IMR-90 (cell line): ENCODE measurements at regions of chr2 and their contacts with region 1.

Region 1: DNA sequence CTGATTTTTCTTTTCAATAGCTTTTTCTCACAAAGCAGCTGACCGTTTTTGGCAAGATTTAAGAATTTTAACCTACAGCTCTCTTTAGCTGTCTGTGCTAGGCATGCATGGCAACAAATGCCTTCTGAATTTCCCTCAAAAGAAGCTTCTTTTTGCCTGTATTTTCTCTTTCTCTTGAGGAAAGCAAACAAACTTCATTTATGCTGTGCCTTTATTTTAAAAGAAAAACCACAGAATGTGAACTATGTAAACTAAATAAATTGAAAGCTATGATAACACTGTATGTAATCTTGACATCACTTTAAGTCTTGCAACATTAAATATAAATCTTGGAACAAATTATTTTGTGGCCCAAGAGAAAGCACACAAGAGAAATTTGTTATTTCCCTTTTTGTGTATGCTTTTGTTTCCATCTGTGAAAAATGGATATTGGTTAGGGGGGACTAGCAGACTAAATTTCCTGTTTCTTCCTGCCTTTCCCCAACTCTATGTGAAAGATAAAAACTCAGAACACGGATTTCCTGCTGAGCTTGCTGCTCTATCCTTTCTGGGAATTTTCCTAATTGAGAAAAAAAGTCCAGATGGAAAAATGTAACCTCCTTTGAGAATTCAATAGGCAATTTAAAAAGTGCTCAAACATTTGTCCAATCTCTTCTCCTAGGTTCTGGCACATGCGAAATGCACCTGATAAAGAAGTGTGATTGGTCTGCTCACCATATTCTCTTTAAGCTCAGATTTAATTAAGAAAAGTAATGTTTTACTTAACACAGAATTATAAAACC is 20.9 kb upstream of the TFPI start:
- DNase-seq: peak; percentile 83
- ATAC-seq: peak; percentile 89
- H3K4me3 ChIP-seq: no peak overlapping the region
- H3K27ac ChIP-seq: peak overlapping the region; percentile 70
- H3K4me1 ChIP-seq: peaks cover 8% of the 10 kb centered on the region
- H3K27me3 ChIP-seq: no peaks in the 10 kb centered on the region
- CTCF ChIP-seq: no peak
- POLR2A ChIP-seq: no peak
- RAD21 ChIP-seq: no peak

Region 2: DNA sequence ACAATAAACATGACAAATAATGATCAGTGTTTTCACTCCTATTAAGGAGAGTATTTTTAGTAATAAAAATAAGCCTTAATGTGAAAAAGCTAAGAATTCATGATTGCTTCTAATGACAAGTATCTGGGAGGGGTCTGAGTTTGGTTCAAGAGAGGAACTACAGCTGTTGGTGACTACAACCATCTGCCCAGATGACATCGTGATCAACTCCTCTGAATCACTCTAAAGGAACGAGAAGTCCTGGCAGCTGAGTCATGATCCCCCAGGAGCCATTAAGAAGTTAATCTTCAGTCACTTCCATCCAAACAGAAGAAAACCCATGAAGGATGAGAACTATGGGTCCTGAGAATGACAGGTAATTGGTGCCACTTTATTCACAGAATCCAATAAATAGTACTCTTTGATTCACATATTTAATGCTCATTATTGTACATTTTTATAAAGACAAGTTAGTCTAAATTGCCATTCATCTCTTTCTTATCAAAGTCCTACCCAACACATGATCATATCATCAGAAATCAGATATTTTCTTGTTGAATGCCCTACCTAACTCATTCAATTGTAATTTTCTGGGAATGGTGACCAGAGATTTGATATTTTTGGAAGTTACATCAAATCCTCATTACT is 27.7 kb before region 1 on chr2:
- CTCF ChIA-PET with region 1: interaction called, 20 read pairs
- POLR2A ChIA-PET with region 1: no interaction called
- dilution Hi-C with region 1: no loop called
- in situ Hi-C with region 1: no loop called
- intact Hi-C with region 1: loop called (anchors 2 kb)
- DNase-seq: peak; percentile 97
- ATAC-seq: peak; percentile 81
- H3K4me3 ChIP-seq: no peak overlapping the region
- H3K27ac ChIP-seq: peak overlapping the region; percentile 8; the same call in 1 of the 2 replicates
- H3K4me1 ChIP-seq: peaks cover 14% of the 10 kb centered on the region
- H3K27me3 ChIP-seq: no peaks in the 10 kb centered on the region
- CTCF ChIP-seq: no peak
- POLR2A ChIP-seq: no peak
- RAD21 ChIP-seq: no peak